ENCODE measurements at regions of chr10 and their contacts with region 1.

Region 1: DNA sequence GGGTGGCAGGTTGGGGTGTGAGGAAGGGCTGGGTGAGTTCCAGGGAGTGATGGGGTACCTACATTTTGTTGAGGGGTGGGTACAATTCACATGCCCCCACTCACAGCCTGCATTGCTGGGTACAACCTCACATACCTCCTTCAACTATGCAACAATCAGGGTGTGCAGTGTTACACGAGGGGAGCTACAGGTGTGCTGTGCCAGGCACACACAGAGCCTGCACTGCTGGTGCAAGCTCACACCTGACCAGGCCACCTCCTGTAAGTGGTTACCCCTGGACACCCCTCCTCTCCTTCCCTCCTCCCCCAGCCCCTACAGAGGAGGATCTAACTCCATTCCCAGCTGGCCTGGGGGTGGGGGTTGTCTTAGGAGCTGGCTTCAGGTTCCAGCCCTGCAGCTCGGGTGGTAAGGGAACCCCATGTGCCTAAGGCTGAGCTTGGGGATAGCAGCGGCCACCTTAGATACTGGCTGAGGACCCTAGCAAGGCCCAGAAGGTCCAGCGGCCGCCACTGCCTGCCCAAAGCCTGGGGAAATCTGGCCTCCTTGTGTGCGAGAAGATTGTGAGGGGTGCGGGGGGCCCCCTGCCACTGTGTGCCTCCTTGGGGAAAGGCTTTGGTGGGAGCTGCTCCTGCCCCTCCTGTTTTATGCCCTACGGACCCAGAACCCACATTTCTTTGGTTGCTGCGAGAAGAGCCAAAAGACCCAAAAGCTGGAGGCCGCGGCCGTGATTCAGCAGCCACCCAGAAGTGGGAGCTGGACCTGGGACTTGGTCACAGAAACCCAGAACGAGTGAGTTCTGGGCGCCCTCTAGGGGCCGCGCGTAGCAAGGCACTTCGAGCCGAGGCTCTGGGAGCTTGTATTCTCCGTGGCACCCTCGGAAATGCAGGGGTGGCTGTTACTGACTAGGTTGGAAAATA is 10.8 kb downstream of the TLX1 start:
- DNase-seq: peak; percentile 88
- H3K4me3 Mint-ChIP-seq: no peak overlapping the region
- H3K27ac Mint-ChIP-seq: no peak overlapping the region
- H3K4me1 Mint-ChIP-seq: peaks cover 21% of the 10 kb centered on the region
- H3K27me3 Mint-ChIP-seq: peaks cover 89% of the 10 kb centered on the region

Region 2: GRCh38 chr10:101042667-101043355 is 99.1 kb before region 1 on chr10:
- CTCF ChIA-PET with region 1: interaction called, 35 read pairs
- intact Hi-C with region 1: loop called (anchors 1 kb)
- DNase-seq: peak; percentile 97
- H3K4me3 Mint-ChIP-seq: peak overlapping the region; percentile 91
- H3K27ac Mint-ChIP-seq: peak overlapping the region; percentile 74
- H3K4me1 Mint-ChIP-seq: peaks cover 22% of the 10 kb centered on the region
- H3K27me3 Mint-ChIP-seq: peaks cover 17% of the 10 kb centered on the region

Region 3: DNA sequence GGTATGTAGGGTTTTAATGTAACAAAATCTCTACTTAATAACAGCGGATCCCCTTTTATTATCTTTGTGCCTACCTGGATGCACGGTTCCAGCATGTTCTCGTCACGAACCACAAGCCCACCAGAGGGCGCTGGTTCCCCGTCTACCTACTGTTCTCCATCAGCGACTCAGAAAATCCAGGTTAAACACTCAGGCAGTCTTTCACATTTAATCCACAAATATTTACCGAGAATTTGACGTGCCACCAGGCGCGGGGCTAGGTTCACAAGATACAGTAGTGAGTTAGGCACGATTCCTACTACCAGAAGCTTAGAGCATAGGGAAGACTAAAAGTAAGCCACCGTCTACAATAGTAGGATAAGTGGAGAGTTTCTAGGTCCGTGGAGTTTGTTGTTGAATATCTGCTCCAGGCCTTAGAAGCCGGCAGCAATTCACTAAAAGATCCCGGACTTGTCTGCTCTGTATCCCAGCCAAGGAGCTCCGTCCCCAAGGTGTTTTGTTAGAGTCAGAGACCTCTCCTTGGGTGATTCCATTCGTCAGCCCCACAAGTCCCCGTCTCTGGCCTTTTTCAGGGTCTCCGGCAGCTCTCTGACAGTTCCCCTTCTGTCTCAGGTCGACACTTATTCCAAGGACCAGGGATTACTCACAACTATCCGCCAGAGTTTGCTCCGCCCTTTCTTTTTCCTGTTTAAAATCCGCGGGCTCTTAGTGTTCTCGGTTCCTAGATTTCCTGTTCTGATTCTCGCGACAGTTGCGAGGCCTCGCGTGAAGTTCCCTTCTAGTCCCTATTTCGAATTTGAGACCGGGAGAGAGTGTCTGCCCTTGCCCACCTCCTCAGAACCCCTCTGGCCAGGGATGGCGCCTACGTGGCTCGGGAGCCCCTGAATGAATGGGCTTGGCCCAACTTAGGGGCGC is 81.6 kb before region 1 on chr10:
- CTCF ChIA-PET with region 1: interaction called, 48 read pairs
- intact Hi-C with region 1: loop called (anchors 1 kb)
- DNase-seq: peak; percentile 96
- H3K4me3 Mint-ChIP-seq: peak overlapping the region; percentile 87
- H3K27ac Mint-ChIP-seq: peak overlapping the region; percentile 93
- H3K4me1 Mint-ChIP-seq: peaks cover 29% of the 10 kb centered on the region
- H3K27me3 Mint-ChIP-seq: peaks cover 24% of the 10 kb centered on the region

Region 4: DNA sequence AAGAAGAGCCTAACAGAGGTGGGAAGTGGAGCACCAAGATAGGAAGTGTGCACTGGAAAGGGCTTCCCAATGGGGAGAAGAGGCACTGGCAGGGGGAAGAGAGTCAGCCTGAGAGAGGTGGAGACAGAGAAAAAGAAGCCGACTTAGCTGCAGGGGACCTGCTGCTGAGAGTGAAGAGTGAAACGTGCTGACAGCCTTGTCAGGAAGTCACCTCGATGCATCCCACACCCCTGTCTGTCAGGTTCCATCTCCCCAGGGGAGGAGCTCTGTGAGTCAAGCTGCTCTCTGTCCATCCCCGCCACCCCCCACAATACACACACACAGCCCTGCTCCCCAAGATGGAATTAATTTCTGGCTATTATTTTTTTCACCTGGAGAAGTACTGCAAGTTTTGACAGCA is 66.1 kb before region 1 on chr10:
- CTCF ChIA-PET with region 1: interaction called, 19 read pairs
- intact Hi-C with region 1: no loop called
- DNase-seq: no peak
- H3K4me3 Mint-ChIP-seq: no peak overlapping the region
- H3K27ac Mint-ChIP-seq: no peak overlapping the region
- H3K4me1 Mint-ChIP-seq: no peaks in the 10 kb centered on the region
- H3K27me3 Mint-ChIP-seq: peaks cover 37% of the 10 kb centered on the region

Region 5: DNA sequence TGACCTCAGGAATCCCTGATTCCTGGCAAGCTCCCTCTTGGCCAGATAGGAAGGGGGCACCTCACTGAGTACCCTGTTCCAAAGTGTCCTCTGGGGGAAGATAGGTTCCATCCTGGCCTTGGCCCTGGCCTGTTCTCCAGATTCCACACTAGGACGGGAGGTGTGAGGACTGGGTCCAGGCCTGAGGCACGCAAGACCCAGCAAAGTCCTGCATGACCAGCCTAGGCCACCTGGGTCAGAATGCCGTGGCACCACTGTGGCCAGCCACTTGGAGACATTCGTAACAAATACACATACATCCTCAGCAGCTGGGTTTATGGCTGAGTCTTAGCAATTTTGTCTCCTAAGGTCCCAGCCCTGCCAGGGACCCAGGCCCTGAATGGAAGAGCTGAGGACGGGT is 34.1 kb before region 1 on chr10:
- CTCF ChIA-PET with region 1: interaction called, 364 read pairs
- intact Hi-C with region 1: no loop called
- DNase-seq: no peak
- H3K4me3 Mint-ChIP-seq: no peak overlapping the region
- H3K27ac Mint-ChIP-seq: no peak overlapping the region
- H3K4me1 Mint-ChIP-seq: no peaks in the 10 kb centered on the region
- H3K27me3 Mint-ChIP-seq: peaks cover 16% of the 10 kb centered on the region

Region 6: DNA sequence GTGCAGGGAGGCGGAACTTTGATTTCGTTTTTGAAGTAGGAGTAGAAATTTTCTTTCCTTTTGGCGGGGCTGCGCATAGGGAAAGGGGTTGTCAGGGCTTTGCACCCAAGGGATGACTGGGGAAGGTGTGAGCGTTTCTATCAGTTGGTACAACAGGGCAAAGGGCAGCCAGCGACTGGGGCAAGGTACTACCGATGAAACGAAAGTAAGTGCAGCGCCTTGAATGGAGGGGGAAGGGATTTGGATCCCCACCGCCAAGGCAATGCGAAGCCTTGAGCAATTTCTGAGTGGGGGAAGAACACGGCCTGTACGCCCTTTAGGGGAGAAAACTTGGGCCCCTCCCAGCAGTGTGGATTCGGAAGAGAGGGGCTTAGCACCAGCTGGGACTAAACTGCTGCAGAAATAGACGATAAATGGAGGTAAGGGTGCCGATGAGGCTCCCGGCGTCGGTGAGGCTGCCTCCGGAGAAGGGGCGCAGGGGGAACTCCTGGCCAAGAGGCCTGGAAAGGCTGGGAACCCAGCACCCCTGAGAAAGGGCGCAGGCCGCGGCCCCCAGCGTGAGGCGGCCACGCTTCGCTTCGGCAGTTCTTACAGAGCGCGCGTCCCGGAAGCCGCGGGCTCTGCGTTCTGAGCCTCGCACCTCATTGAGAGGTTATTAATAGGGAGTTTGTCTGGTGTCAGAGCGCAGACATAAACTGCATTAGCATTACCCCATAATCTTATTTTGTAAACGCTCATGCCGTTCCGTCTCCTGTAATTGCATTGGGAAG is 20.8 kb before region 1 on chr10:
- CTCF ChIA-PET with region 1: interaction called, 28 read pairs
- intact Hi-C with region 1: no loop called
- DNase-seq: peak; percentile 52
- H3K4me3 Mint-ChIP-seq: peak overlapping the region; percentile 86
- H3K27ac Mint-ChIP-seq: no peak overlapping the region
- H3K4me1 Mint-ChIP-seq: peaks cover 26% of the 10 kb centered on the region
- H3K27me3 Mint-ChIP-seq: peaks cover 41% of the 10 kb centered on the region

Region 7: DNA sequence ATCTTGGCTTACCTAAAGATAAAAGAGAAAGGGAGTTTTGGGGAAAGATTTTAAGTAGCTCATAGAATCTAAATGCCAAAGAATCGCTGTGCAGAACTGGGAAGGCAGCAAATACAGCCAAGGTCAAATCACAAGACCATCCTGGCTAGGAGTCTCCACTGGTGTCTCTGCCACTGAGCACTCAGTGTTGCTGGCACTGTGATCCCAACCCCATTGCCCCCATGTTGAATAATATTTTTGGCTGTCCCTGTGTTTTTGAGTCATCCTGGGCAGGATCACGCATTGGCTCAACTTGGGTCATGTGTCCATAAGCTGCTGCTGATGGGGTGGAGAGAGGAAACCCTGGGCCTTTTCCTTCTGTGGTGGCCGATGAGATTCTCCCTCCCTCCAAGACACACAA is 10.4 kb after region 1 on chr10:
- CTCF ChIA-PET with region 1: interaction called, 19 read pairs
- intact Hi-C with region 1: no loop called
- DNase-seq: no peak
- H3K4me3 Mint-ChIP-seq: no peak overlapping the region
- H3K27ac Mint-ChIP-seq: no peak overlapping the region
- H3K4me1 Mint-ChIP-seq: no peaks in the 10 kb centered on the region
- H3K27me3 Mint-ChIP-seq: peaks cover 37% of the 10 kb centered on the region

Region 8: DNA sequence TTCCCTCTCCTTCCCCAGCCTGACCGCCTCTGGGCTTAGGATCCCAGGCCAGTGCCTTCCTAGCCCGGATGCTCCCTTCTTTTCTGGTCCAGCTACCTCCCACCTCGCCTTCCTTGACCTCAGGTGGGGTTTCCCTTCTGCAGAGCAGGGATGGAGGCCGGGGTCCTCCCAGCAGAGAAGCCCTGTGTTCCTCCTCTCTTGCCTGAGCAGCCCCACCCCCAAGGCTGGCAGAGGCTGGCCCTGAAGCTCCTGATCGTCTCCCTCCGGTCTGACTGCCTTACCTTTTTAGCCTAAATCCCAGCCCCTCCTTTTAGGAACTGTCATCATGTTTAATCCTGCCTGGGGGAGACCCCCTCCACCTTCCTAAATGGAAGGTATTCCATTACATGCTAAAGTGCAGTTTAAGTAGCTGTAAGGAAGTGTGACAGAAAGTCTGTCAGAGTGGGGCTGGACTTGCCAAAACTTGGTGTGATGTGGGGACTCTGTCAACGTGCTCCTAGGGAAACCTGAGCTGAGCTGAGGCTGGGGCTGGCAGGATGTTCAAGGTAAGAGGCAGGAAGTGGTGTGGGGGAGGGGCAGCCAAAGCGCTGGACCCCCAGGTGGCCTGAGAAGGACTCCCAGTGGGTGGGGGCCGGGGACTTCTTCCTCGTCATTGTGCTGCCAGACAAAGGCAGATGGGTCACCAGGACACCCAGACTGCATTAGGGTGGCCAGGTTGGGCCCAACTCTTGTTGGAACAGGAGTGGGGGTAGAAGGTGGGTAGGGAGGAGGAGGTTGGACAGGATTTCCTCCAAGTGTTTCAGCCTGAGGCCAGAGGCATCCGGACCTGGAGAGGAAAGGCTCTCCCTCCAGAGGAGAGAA is 47.9 kb after region 1 on chr10:
- CTCF ChIA-PET with region 1: no interaction called
- intact Hi-C with region 1: no loop called
- DNase-seq: no peak
- H3K4me3 Mint-ChIP-seq: no peak overlapping the region
- H3K27ac Mint-ChIP-seq: no peak overlapping the region
- H3K4me1 Mint-ChIP-seq: peaks cover 5% of the 10 kb centered on the region
- H3K27me3 Mint-ChIP-seq: peaks cover 3% of the 10 kb centered on the region

Region 9: DNA sequence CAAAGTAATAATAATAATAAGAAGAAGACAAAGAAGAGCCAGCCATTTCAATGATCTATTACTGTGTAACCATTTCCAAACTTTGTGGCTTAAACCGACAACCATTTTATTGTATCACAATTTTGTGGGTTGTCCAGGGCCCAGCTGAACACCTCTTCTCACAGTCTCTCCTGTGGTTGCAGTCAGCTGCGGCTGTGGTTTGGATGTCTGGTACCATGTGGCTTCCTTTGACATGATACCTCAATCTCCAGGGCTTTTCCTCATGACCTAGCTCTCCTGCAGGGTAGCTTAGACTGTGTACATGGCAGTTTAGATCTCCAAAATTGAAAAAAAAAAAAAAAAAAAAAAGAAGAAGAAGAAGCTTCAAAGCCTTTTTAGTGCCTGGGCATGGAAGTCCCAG is 1181.0 kb after region 1 on chr10:
- CTCF ChIA-PET with region 1: no interaction called
- intact Hi-C with region 1: no loop called
- DNase-seq: peak; percentile 43
- H3K4me3 Mint-ChIP-seq: no peak overlapping the region
- H3K27ac Mint-ChIP-seq: no peak overlapping the region
- H3K4me1 Mint-ChIP-seq: peaks cover 17% of the 10 kb centered on the region
- H3K27me3 Mint-ChIP-seq: no peaks in the 10 kb centered on the region